ENCODE measurements at regions of chr15 and their contacts with region 1.

Region 1: DNA sequence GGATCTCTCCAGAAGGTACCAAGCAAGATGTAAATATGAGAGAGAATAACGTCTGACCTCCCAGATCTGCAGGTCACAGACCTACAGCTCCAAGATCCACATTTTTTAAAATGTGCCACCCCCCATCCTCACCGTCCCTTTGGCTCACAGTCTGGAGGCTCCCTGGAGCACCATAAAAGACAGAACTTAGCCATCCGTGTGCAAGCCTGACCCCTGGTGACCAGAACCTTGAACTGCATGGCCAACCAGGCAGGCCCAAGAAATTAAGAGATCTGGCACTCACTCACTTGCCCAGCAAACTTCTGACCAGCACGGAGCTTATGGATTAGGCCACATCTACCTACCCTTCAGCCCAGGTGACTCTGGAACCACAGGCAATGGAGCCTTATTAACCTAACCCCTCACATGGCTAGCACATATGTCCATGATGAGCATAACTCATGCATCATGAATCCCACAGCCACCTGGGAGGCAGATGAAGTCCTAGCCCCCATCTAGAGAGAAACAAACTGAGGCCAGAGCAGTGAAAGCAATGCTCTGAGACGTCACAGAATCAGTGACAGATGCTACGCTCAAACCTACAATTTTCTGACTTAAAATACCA is 275.3 kb downstream of the UACA start:
- DNase-seq: peak; percentile 58 to 89 (median 88)
- ATAC-seq: peak; percentile 40 to 52
- H3K4me3 ChIP-seq: no peak overlapping the region
- H3K27ac ChIP-seq: no peak overlapping the region
- H3K4me1 ChIP-seq: no peaks in the 10 kb centered on the region
- H3K27me3 ChIP-seq: no peaks in the 10 kb centered on the region

Region 2: GRCh38 chr15:69475769-69476358 is 1012.2 kb before region 1 on chr15:
- intact Hi-C with region 1: loop called (anchors 5 kb)
- DNase-seq: peak; percentile 74 to 92 (median 89)
- ATAC-seq: peak; percentile 75 to 80
- H3K4me3 ChIP-seq: no peak overlapping the region
- H3K27ac ChIP-seq: no peak overlapping the region
- H3K4me1 ChIP-seq: no peaks in the 10 kb centered on the region
- H3K27me3 ChIP-seq: no peaks in the 10 kb centered on the region

Region 3: GRCh38 chr15:69484832-69485231 is 1003.3 kb before region 1 on chr15:
- intact Hi-C with region 1: loop called in 1 of 4 experiments (anchors 5 kb)
- DNase-seq: no peak
- ATAC-seq: peak; percentile 39 to 49
- H3K4me3 ChIP-seq: no peak overlapping the region
- H3K27ac ChIP-seq: no peak overlapping the region
- H3K4me1 ChIP-seq: peaks cover 4% of the 10 kb centered on the region
- H3K27me3 ChIP-seq: no peaks in the 10 kb centered on the region

Region 4: GRCh38 chr15:69576035-69576526 is 912.0 kb before region 1 on chr15:
- intact Hi-C with region 1: loop called in 2 of 4 experiments (anchors 10 kb)
- DNase-seq: peak; percentile 43 to 77 (median 76)
- ATAC-seq: peak; percentile 73 to 76
- H3K4me3 ChIP-seq: no peak overlapping the region
- H3K27ac ChIP-seq: no peak overlapping the region
- H3K4me1 ChIP-seq: no peaks in the 10 kb centered on the region
- H3K27me3 ChIP-seq: no peaks in the 10 kb centered on the region

Region 5: DNA sequence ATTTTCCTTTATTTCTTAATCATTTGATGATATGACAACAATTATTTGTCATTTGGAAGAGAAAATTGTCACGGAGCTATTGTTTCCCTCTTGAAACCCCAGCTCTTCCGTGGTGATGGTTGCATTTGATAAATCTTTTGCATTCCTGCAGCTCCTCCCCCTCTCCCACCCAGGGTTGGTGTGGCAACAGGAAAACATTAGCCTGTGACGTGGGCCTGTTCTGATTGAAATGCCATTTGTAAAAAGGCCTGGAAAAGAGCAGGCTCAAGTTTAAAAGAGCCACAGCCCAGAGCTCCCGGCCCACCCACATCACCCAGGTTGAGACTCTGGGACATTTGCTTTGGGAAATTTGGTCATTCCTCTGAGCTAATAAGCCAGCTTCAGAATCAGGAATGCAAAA is 753.0 kb before region 1 on chr15:
- intact Hi-C with region 1: loop called in 2 of 4 experiments (anchors 10 kb)
- DNase-seq: peak in 1 of 3 donors; percentile 33
- ATAC-seq: peak in 1 of 2 donors; percentile 35
- H3K4me3 ChIP-seq: no peak overlapping the region
- H3K27ac ChIP-seq: no peak overlapping the region
- H3K4me1 ChIP-seq: no peaks in the 10 kb centered on the region
- H3K27me3 ChIP-seq: no peaks in the 10 kb centered on the region

Region 6: GRCh38 chr15:70741107-70741531 is 253.0 kb after region 1 on chr15:
- intact Hi-C with region 1: no loop called
- DNase-seq: peak; percentile 60 to 79 (median 70)
- ATAC-seq: peak; percentile 89 to 91
- H3K4me3 ChIP-seq: no peak overlapping the region
- H3K27ac ChIP-seq: peak overlapping the region; percentile 73
- H3K4me1 ChIP-seq: peaks cover 4% of the 10 kb centered on the region
- H3K27me3 ChIP-seq: no peaks in the 10 kb centered on the region

Measured in right cardiac atrium (tissue), 5 donors.